ENCODE measurements at regions of chr2 and their contacts with region 1.

Region 1: GRCh38 chr2:55916473-55917049 is 7.0 kb downstream of the EFEMP1 start:
- DNase-seq: peak; percentile 80
- H3K4me3 ChIP-seq: peak overlapping the region in 2 of 3 experiments; percentile 57 to 97
- H3K27ac ChIP-seq: peak overlapping the region; percentile 82
- H3K4me1 ChIP-seq: peaks cover 91% of the 10 kb centered on the region
- H3K27me3 ChIP-seq: no peaks in the 10 kb centered on the region
- CTCF ChIP-seq: no peak
- POLR2A ChIP-seq: no peak

Region 2: GRCh38 chr2:55901325-55901724 is 15.2 kb before region 1 on chr2:
- CTCF ChIA-PET with region 1: interaction called, 4 read pairs
- POLR2A ChIA-PET with region 1: interaction called, 3 read pairs
- dilution Hi-C with region 1: no loop called
- intact Hi-C with region 1: loop called (anchors 1 kb)
- DNase-seq: peak; percentile 50
- H3K4me3 ChIP-seq: no peak overlapping the region
- H3K27ac ChIP-seq: peak overlapping the region; percentile 49
- H3K4me1 ChIP-seq: peaks cover 70% of the 10 kb centered on the region
- H3K27me3 ChIP-seq: no peaks in the 10 kb centered on the region
- CTCF ChIP-seq: no peak
- POLR2A ChIP-seq: peak; percentile 19

Region 3: GRCh38 chr2:56077352-56077915 is 160.9 kb after region 1 on chr2:
- CTCF ChIA-PET with region 1: no interaction called
- POLR2A ChIA-PET with region 1: no interaction called
- dilution Hi-C with region 1: no loop called
- intact Hi-C with region 1: no loop called
- DNase-seq: peak; percentile 42
- H3K4me3 ChIP-seq: no peak overlapping the region
- H3K27ac ChIP-seq: no peak overlapping the region
- H3K4me1 ChIP-seq: no peaks in the 10 kb centered on the region
- H3K27me3 ChIP-seq: peaks cover 0 to 2% of the 10 kb centered on the region in 2 experiments
- CTCF ChIP-seq: peak; percentile 33 to 58
- POLR2A ChIP-seq: no peak